Activated T-helper 2 cell treated with anti-CD3 and anti-CD28 coated beads, Interferon-gamma antibody, Interleukin-2, Interleukin-4, amounts not matched to agents 10 μg/mL and 5 μg/mL and 100 μg/mL, durations not matched to agents 14 hours and 24 hours and 36 hours (primary cell): ENCODE measurements at regions of chr1 and their contacts with region 1.

Region 1: GRCh38 chr1:166133276-166133841 is 33.4 kb downstream of the FAM78B start:
- DNase-seq: no peak
- H3K4me3 Mint-ChIP-seq: no peak overlapping the region
- H3K27ac Mint-ChIP-seq: no peak overlapping the region
- H3K4me1 Mint-ChIP-seq: no peaks in the 10 kb centered on the region
- H3K27me3 Mint-ChIP-seq: peaks cover 1% of the 10 kb centered on the region

Region 2: DNA sequence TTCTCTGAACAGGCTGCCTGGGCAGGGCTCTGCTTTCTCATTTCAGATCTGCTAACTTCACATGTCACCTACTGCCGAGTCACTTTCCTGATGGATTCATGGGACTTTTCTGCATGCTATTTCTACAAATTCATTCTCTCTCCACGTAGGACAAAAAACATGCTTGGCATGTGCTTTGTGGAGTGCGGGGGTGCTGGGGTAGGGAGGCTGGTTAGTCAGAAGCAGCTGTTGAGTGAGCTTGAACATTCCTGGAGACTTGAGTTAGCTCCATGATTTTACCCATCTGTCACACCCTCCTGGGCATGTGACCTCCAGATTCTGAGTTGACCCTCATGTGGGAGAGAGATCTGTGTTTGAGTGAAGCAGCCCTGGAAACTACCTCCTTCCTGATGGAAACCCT is 234.5 kb before region 1 on chr1:
- intact Hi-C with region 1: no loop called
- DNase-seq: no peak
- H3K4me3 Mint-ChIP-seq: no peak overlapping the region
- H3K27ac Mint-ChIP-seq: no peak overlapping the region
- H3K4me1 Mint-ChIP-seq: peaks cover 19% of the 10 kb centered on the region
- H3K27me3 Mint-ChIP-seq: no peaks in the 10 kb centered on the region

Region 3: DNA sequence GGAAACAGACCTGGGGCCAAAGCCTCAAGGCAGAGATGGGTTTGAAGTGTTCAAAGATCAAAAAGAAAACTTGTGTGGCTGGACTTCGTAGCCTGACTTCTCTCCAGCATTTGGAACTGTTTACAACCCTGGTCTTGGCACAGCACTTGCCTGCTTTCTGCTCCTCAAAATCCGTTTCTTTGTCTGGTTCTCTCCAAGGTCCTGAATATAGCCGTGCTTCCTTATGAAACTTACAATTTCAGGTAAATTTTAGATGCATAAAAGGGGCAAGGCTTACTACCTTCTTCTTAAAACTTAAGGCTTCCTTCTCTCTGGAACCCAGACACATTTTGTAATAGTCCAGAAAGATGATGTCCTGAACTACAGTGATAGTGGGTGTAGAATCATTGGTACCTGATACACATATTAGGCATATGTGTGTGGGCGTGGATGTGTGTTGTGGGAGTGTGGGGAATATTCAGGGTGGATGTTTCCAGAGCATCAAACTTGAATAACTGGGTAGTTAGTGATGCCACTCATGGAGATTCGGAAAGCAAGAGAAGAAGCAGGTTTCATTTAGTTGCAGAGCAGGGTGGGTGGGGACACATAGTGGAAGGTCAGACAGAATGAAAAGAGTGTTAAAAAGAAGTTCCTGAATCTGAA is 59.8 kb after region 1 on chr1:
- intact Hi-C with region 1: no loop called
- DNase-seq: no peak
- H3K4me3 Mint-ChIP-seq: no peak overlapping the region
- H3K27ac Mint-ChIP-seq: no peak overlapping the region
- H3K4me1 Mint-ChIP-seq: no peaks in the 10 kb centered on the region
- H3K27me3 Mint-ChIP-seq: no peaks in the 10 kb centered on the region

Region 4: DNA sequence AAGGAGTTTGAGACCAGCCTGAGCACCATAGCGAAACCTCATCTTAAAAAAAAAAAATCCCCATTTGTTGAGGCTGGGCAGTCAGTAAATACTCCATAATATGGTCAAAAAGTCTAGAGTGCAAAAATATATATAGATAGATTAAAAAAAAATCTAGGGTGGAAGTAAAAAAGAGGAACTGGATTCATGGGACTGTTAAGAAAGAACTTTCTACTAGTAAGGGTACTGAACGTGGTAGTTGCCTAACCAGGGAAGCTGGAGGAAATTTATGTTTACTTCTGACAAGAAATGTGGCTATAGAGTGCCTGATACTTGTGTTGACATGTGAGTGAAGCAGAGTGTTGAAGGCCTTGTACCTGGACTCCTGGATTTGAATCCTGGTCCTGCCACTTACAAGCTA is 299.3 kb after region 1 on chr1:
- intact Hi-C with region 1: loop called (anchors 5 kb)
- DNase-seq: no peak
- H3K4me3 Mint-ChIP-seq: no peak overlapping the region
- H3K27ac Mint-ChIP-seq: no peak overlapping the region
- H3K4me1 Mint-ChIP-seq: no peaks in the 10 kb centered on the region
- H3K27me3 Mint-ChIP-seq: no peaks in the 10 kb centered on the region

Region 5: DNA sequence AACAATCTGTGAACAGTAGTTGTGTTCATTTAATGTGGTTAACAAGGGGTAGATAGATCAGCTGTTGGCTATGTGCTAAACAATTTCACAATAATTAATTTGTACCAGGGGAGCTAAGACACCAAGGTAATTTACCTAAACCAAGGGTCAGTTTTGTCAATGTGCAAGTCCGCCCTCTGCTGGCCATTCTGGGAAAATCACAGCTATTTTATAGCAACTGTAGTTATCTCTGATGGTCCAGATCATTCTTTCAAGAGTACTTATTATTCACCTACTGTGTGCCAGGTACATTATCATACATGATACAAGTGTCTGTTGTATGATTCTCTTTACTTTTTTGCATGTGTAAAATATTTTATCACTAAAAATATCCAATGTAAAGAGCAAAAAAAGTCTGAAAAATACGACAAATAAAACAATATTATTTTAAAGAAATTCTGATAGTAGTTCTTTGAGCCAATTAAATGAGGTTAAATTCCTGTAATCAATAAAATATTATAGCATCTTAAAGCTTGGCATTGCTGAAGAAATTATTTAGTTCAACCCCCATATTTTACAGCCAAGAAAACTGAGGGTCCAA is 345.8 kb after region 1 on chr1:
- intact Hi-C with region 1: loop called (anchors 2 kb)
- DNase-seq: peak; percentile 24
- H3K4me3 Mint-ChIP-seq: no peak overlapping the region
- H3K27ac Mint-ChIP-seq: no peak overlapping the region
- H3K4me1 Mint-ChIP-seq: peaks cover 1% of the 10 kb centered on the region
- H3K27me3 Mint-ChIP-seq: peaks cover 8% of the 10 kb centered on the region